Brain microvascular endothelial cell (primary cell): ENCODE measurements at regions of chr3 and their contacts with region 1.

Region 1: DNA sequence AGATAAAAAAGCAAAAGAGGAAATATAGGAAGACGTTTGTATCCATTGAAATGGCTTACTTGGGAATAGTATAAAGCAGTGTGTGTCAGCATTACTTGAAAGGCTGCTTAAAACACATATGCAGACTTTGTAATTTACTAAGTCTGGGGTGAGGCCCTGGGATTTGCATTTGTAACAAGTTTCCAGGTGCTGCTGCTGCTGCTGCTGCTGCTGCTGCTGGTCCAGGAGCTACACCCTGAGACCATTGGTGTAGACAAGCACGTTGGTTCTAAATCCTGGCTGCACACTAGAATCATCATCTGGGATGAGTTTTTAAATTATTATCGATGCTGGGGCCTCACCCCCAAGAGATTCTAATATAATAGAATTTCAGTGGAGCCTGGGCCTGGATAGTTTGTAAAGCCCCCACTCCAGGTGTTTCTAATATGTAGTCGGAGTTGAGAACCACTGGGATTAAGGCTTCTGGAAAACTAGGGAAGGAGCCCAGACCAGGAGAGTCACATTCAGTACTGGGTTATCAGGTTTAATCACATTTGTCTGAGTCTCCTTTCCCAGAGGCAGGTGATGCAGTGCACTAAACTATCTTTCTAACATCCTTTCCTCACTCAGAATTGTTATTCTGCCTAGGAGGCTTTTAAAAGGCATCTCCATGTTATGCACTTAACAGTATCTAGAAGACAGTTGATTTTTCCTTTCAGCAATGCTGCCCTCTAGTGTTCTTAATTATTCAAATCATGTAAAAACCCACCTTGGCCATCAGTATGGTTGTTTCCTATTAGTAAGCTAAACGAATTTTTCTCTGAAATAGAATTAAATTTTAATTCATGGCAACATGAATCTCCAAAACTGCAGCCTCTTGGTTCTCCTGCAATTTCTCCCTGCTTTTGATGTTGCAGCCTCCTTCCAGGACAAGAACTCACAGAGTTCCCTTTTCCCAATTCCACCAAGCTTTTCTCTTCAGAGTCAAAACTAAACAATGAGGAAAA is 45.4 kb downstream of the SSR3 start:
- DNase-seq: peak; percentile 51
- H3K4me3 ChIP-seq: no peak overlapping the region
- H3K27ac ChIP-seq: no peak overlapping the region
- H3K27me3 ChIP-seq: no peaks in the 10 kb centered on the region
- CTCF ChIP-seq: peak; percentile 23

Region 2: GRCh38 chr3:156151824-156152428 is 357.6 kb before region 1 on chr3:
- in situ Hi-C with region 1: loop called (anchors 25 kb)
- DNase-seq: peak; percentile 79
- H3K4me3 ChIP-seq: no peak overlapping the region
- H3K27ac ChIP-seq: no peak overlapping the region
- H3K27me3 ChIP-seq: no peaks in the 10 kb centered on the region
- CTCF ChIP-seq: peak; percentile 89

Region 3: GRCh38 chr3:156260331-156260730 is 249.2 kb before region 1 on chr3:
- in situ Hi-C with region 1: no loop called
- DNase-seq: no peak
- H3K4me3 ChIP-seq: no peak overlapping the region
- H3K27ac ChIP-seq: no peak overlapping the region
- H3K27me3 ChIP-seq: no peaks in the 10 kb centered on the region
- CTCF ChIP-seq: no peak

Region 4: DNA sequence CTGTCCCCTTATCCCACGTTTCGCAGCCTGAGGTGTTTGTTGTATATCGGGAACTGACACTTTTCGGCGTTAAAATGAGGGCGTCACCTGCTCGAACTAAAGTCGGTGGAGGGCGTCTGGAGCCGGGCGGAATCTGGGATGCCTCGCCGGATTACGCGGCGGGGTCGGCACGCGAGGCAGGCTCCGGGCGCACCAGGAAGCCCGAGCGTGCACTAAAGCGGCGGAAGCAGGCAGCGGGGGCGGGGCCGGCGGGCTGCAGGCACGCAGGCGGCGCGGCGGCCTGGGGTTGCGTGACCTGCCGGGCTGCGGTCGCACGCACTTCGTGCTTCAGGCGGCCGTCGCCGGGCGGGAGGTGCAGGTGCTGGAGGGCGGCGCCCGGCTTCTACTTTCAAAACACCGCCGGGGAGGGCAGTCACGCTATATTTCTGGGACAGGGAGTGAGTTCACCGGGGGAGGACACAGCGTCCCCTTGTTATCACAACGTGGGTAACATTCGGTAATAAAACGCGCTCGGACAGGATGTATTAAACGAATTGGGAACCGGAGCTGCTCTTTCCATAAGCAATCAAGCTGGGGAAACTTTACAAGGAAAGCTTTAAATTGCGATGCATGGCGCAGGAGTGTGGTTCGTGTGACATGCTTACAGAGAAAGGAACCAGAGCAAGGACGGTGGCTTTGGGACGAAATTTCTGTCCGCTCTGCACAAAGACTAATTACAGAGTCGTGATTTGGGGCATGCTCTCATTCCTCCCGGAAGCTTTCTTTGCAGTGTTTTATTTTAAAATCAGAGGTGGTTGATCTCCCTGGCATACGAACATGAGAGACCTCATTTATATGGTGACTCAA is 307.5 kb after region 1 on chr3:
- in situ Hi-C with region 1: no loop called
- DNase-seq: peak; percentile 91
- H3K4me3 ChIP-seq: peak overlapping the region; percentile 28
- H3K27ac ChIP-seq: peak overlapping the region; percentile 91
- H3K27me3 ChIP-seq: no peaks in the 10 kb centered on the region
- CTCF ChIP-seq: no peak

Region 5: DNA sequence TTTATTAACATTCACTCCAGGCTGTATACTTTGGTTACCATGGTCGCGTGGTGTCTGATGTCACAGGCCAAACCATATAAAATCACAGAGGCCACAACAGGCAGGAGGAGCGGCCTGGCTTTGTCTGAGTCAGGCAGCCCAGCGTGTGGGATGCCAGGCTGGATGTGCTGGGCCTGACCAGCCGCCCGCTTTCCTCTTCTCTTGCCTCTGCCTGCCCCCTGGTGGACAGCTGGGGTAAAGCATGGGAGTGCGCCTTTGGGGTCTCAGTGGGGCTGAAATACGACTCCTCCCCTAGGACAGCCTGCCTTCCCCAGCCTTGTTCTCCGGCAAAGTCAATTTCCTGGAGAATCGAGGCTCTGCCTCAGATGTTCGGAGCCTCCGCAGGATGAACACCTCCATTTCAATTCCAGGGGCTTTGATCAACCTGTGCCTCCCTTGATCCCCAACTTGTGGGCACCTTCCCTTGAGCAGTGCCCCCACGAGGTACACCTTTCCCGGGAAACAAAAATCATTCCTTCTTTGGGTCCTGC is 572.3 kb after region 1 on chr3:
- in situ Hi-C with region 1: loop called (anchors 25 kb)
- DNase-seq: peak; percentile 97
- H3K4me3 ChIP-seq: no peak overlapping the region
- H3K27ac ChIP-seq: peak overlapping the region; percentile 64
- H3K27me3 ChIP-seq: no peaks in the 10 kb centered on the region
- CTCF ChIP-seq: peak; percentile 97